Caco-2 (cell line): ENCODE measurements at regions of chr17 and their contacts with region 1.

Region 1: GRCh38 chr17:42980398-42981397 is at the start of gene RUNDC1:
- DNase-seq: peak; percentile 91 to 94
- H3K4me3 ChIP-seq: peak within 1 kb of the TSS; percentile 100
- H3K4me3 Mint-ChIP-seq: peak within 1 kb of the TSS; percentile 100
- H3K27ac Mint-ChIP-seq: peak within 1 kb of the TSS; percentile 96
- H3K4me1 ChIP-seq: peaks cover 7% of the 10 kb centered on the region; the same call in 1 of the 2 replicates
- H3K4me1 Mint-ChIP-seq: peaks cover 12% of the 10 kb centered on the region
- H3K27me3 ChIP-seq: no peaks in the 10 kb centered on the region
- H3K27me3 Mint-ChIP-seq: no peaks in the 10 kb centered on the region
- CTCF ChIP-seq: peak in 1 of 2 experiments; percentile 55
- total RNA-seq, gene RUNDC1: 17.6 and 18.2 TPM in 2 replicates

Region 2: GRCh38 chr17:42879596-42879985 is 101.1 kb before region 1 on chr17:
- CTCF ChIA-PET with region 1: no interaction called
- POLR2A ChIA-PET with region 1: no interaction called
- intact Hi-C with region 1: no loop called
- DNase-seq: no peak
- H3K4me3 ChIP-seq: no peak overlapping the region
- H3K4me3 Mint-ChIP-seq: no peak overlapping the region
- H3K27ac Mint-ChIP-seq: no peak overlapping the region
- H3K4me1 ChIP-seq: no peaks in the 10 kb centered on the region
- H3K4me1 Mint-ChIP-seq: peaks cover 9% of the 10 kb centered on the region
- H3K27me3 ChIP-seq: no peaks in the 10 kb centered on the region
- H3K27me3 Mint-ChIP-seq: no peaks in the 10 kb centered on the region
- CTCF ChIP-seq: no peak

Region 3: DNA sequence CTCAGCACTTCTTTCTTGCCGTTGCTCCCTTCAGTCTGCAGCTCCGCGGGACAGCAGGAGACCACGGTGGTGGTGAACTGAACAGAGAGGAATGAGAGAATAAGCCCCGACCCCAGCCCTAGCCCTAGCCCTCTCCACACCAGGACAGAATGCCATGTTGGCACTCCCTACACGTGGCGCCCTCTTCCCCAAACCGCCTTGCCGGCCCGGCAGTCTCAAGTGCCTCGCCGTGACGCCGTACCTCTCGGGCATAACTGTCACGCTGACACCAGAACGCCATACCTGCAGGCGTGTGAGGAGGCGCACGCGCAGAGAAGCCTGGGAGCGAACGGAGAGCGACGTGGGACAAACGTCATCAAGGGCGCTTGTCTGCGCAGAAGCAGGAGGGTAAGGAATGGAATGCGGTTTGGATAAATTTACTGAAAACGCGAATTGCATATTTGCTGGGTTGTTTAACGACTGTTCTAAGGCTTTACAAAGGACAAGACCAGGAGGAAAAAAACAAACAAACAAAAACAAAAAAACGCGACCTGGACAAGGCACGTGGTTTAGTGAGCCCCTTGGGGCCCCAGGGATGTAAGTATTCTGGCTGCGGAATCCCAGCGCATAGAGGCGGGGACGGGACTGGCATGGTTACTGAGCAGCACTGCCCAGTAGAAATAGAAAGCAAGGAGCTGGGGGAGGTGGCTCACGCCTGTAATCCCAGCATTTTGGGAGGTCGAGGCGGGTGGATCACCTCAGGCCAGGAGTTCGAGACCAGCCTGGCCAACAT is 16.4 kb before region 1 on chr17 and contains the start of gene AARSD1:
- CTCF ChIA-PET with region 1: interaction called, 3 read pairs
- POLR2A ChIA-PET with region 1: interaction called, 4 read pairs
- intact Hi-C with region 1: loop called (anchors 2 kb)
- DNase-seq: peak; percentile 95 to 96
- H3K4me3 ChIP-seq: peak within 1 kb of the TSS; percentile 64
- H3K4me3 Mint-ChIP-seq: peak within 1 kb of the TSS; percentile 99
- H3K27ac Mint-ChIP-seq: peak within 1 kb of the TSS; percentile 99
- H3K4me1 ChIP-seq: no peaks in the 10 kb centered on the region
- H3K4me1 Mint-ChIP-seq: peaks cover 9% of the 10 kb centered on the region
- H3K27me3 ChIP-seq: no peaks in the 10 kb centered on the region
- H3K27me3 Mint-ChIP-seq: no peaks in the 10 kb centered on the region
- CTCF ChIP-seq: no peak
- total RNA-seq, gene AARSD1: 69.0 and 76.2 TPM in 2 replicates